ENCODE measurements at regions of chr13 and their contacts with region 1.

Region 1: DNA sequence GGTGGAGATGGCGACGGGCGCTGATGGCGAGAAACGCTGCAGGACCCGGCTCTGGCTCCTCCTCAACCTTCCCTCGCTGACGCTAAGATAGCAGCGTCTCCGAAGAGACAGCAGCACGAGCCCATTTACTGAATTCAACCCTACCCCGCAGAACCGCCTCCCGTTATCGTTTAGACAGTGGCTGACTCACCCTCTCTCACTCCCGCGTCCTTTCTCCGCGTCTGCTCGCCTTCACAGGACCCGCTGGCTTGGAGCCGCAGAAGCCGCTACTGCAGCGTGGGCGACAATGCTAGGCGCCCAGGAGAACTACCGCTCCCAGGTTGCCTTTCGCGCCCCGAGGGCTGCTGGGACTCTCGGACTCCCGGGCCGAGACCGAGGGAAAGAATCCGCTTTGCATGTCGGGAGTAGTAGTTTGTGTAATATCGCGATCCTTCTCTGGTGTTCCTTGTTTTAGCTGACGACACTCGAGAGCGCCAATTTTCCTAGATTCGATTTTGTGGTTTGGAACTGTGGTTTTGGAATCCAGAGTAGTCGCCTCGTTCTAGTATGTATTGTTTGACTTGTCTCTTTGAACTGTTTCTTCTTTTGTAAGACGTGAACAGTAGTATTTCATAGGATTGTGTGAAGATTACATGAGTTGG is at the start of gene KBTBD6:
- DNase-seq: peak; percentile 96 to 97
- H3K4me3 ChIP-seq: peak within 1 kb of the TSS; percentile 61 to 86
- H3K27ac ChIP-seq: peak within 1 kb of the TSS; percentile 75 to 82
- H3K4me1 ChIP-seq: peaks cover 0 to 44% (median 16%) of the 10 kb centered on the region in 4 donors
- H3K27me3 ChIP-seq: no peaks in the 10 kb centered on the region
- CTCF ChIP-seq: no peak

Region 2: DNA sequence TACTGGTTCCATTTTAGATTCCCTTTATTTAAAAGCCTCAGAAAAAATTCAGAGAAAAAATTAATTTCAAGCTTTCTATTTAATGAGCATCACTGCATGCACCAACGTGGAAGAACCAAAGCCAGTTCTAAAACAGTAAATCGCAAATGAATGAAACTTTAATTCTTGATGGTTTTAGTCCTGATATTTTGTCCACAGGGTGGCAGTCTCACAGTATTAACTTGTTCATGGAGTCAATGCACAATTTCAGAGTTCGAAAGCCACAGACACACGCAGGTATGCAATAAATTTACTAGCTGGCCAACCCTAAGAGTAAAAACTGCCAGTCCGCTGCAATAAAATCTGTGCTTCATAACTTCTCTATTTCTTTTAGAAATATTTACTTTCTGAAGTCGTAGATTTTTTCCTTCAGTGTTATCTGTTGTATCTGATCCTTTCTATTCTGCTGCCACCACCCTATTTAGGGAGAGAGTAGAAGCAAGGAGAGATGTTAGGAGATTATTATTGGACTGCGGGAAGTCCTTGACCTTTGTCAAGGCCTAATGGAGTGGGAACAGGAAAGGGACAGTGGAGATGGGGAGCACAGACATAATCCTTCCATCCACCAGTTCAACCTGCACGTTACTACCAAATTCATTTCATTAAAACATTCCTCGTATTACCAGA is 78.3 kb before region 1 on chr13:
- intact Hi-C with region 1: loop called (anchors 5 kb)
- DNase-seq: no peak
- H3K4me3 ChIP-seq: no peak overlapping the region
- H3K27ac ChIP-seq: peak overlapping the region; percentile 59 to 73
- H3K4me1 ChIP-seq: peaks cover 0 to 93% (median 40%) of the 10 kb centered on the region in 4 donors
- H3K27me3 ChIP-seq: no peaks in the 10 kb centered on the region
- CTCF ChIP-seq: peak; percentile 36 to 47

Region 3: DNA sequence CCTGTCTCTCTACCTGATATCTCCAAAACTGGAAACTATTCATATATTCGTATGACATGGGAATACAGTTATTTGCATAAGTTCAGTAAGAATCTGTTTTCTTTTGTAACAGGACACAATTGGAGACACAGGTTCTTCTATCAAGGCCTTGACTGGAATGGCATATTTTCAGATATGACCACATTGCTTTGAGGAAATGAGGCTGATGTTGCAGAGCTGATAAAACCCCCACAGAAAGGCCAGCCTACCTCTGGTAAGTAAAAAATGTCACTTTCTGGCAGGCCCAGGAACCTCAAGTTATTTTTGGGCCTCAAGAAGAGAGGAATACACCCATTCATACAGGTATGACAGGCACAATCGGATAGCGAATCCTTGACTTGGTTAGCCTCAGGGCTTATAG is 29.5 kb after region 1 on chr13:
- intact Hi-C with region 1: no loop called
- DNase-seq: no peak
- H3K4me3 ChIP-seq: no peak overlapping the region
- H3K27ac ChIP-seq: no peak overlapping the region
- H3K4me1 ChIP-seq: no peaks in the 10 kb centered on the region
- H3K27me3 ChIP-seq: no peaks in the 10 kb centered on the region
- CTCF ChIP-seq: no peak

Region 4: GRCh38 chr13:41193919-41194824 is 61.5 kb after region 1 on chr13 and contains the start of gene KBTBD7:
- intact Hi-C with region 1: loop called (anchors 2 kb)
- DNase-seq: peak; percentile 93 to 95
- H3K4me3 ChIP-seq: peak within 1 kb of the TSS; percentile 78 to 90
- H3K27ac ChIP-seq: peak within 1 kb of the TSS; percentile 82 to 85
- H3K4me1 ChIP-seq: peaks cover 0 to 23% (median 15%) of the 10 kb centered on the region in 4 donors
- H3K27me3 ChIP-seq: no peaks in the 10 kb centered on the region
- CTCF ChIP-seq: no peak

Region 5: DNA sequence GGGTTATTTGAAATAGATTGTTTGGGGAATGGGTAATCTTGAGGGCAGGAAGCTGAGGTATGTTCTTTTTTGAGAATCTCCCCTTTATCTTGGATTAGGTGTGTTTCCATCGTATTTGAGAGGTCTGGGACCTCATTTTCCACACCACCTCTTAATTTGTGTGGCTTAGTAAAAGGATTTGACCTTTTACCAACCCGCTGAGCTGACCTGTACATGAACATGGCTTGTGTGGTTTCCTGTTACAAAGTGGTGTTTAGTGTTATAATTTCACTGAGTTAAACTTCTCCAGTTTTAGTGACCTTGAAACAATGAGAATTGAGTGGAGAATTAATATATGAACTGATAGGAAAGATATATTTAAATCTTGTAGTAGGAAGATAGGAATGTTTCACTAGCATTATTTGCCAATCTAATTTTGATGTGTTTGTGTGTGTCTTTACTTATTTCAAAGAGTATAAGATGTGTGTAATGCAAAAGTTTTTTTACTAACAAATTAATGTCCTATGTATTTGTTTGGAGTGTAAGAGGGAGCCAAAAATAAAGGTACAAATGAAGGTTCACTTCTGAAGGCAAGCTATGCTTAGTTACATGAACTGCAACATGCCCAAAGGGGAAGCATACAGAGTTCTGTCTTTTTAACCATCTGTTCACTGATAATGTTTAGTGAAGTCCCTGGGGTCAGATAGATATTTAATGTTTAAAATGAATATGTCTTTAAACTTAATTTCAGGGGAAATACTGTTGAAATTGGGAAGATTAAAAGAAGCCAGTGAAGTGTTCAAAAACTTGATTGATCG is 195.6 kb after region 1 on chr13:
- intact Hi-C with region 1: no loop called
- DNase-seq: no peak
- H3K4me3 ChIP-seq: no peak overlapping the region
- H3K27ac ChIP-seq: no peak overlapping the region
- H3K4me1 ChIP-seq: peaks cover 0 to 22% (median 5%) of the 10 kb centered on the region in 4 donors
- H3K27me3 ChIP-seq: no peaks in the 10 kb centered on the region
- CTCF ChIP-seq: no peak